ENCODE measurements at regions of chr10 and their contacts with region 1.

Region 1: GRCh38 chr10:96789571-96790108 is 42.5 kb upstream of the LCOR start:
- DNase-seq: no peak
- H3K4me3 ChIP-seq: no peak overlapping the region
- H3K27ac ChIP-seq: no peak overlapping the region
- H3K27me3 ChIP-seq: peaks cover 6% of the 10 kb centered on the region
- CTCF ChIP-seq: peak; percentile 81

Region 2: DNA sequence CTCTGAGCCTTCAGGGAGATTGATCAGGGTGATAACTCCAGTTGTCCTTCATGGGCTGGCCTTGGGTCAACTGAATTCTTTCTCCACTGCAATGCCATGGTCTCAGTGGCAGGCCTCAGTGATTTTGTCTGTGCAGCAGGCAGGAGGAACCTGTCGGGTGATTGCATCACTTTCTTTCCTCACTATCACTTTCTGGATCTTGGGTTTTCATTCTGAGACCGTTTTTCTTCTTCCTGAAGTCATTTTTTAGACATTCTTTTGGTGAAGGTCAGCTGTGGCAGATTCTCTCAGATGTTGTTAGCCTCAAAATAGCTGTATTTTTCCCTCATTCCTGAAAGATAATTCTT is 13.7 kb after region 1 on chr10:
- CTCF ChIA-PET with region 1: interaction called, 10 read pairs
- POLR2A ChIA-PET with region 1: no interaction called
- DNase-seq: no peak
- H3K4me3 ChIP-seq: no peak overlapping the region
- H3K27ac ChIP-seq: no peak overlapping the region
- H3K27me3 ChIP-seq: no peaks in the 10 kb centered on the region
- CTCF ChIP-seq: no peak

Region 3: DNA sequence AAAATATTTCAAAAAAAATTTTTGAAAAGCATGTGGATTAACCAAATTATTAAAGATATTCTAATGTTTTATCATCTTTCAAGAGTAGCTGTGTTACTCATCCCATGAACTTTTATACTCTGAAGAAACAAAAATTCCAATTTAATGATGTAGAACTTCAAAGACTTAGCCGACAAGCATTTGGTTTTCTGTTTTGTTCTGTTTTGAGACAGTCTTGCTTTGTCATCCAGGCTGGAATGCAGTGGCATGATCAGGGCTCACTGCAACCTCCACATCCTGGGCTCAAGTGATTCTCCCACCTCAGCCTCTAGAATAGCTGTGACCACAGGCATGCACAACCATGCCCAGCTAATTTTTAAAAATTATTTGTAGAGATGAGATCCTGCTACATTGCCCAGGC is 24.6 kb after region 1 on chr10:
- CTCF ChIA-PET with region 1: interaction called, 13 read pairs
- POLR2A ChIA-PET with region 1: no interaction called
- DNase-seq: no peak
- H3K4me3 ChIP-seq: no peak overlapping the region
- H3K27ac ChIP-seq: no peak overlapping the region
- H3K27me3 ChIP-seq: no peaks in the 10 kb centered on the region
- CTCF ChIP-seq: no peak

Measured in AG04450 (cell line).